ENCODE measurements at regions of chr20 and their contacts with region 1.

Region 1: GRCh38 chr20:51385646-51386530 is 156.6 kb downstream of the NFATC2 start:
- DNase-seq: no peak
- H3K4me3 ChIP-seq: no peak overlapping the region
- H3K27me3 ChIP-seq: no peaks in the 10 kb centered on the region
- CTCF ChIP-seq: peak; percentile 75

Region 2: GRCh38 chr20:51162015-51162414 is 223.9 kb before region 1 on chr20:
- CTCF ChIA-PET with region 1: no interaction called
- POLR2A ChIA-PET with region 1: no interaction called
- DNase-seq: no peak
- H3K4me3 ChIP-seq: no peak overlapping the region
- H3K27me3 ChIP-seq: peaks cover 12% of the 10 kb centered on the region
- CTCF ChIP-seq: no peak

Region 3: GRCh38 chr20:51396365-51396909 is 10.5 kb after region 1 on chr20:
- CTCF ChIA-PET with region 1: interaction called, 15 read pairs
- POLR2A ChIA-PET with region 1: no interaction called
- DNase-seq: no peak
- H3K4me3 ChIP-seq: no peak overlapping the region
- H3K27me3 ChIP-seq: no peaks in the 10 kb centered on the region
- CTCF ChIP-seq: no peak

Region 4: GRCh38 chr20:51695574-51696303 is 309.9 kb after region 1 on chr20:
- CTCF ChIA-PET with region 1: no interaction called
- POLR2A ChIA-PET with region 1: no interaction called
- DNase-seq: peak; percentile 77
- H3K4me3 ChIP-seq: peak overlapping the region; percentile 5; the same call in 1 of the 2 replicates
- H3K27me3 ChIP-seq: no peaks in the 10 kb centered on the region
- CTCF ChIP-seq: no peak